CD14-positive monocyte (primary cell): ENCODE measurements at regions of chr1 and their contacts with region 1.

Region 1: DNA sequence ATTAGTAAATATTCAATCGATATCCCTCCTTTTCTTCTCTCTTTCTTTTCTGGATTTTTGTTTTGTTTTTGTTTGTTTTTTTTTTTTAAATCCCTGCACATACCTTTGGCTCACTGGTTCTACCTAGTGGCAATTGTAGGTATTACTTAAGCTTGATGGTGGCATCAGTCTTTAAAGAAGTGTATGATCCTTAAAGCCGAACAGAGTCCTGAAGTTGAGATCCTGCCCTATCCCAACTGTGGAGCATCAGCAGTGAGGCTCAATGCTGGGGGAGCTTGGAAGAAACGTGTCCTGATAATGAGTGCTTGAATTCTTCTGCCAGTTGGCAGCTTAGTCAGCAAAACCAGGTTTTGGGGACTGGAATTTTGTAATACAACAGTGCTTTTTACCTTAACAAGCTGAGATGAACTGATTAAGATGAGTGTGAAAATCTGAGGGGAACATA is 60.8 kb downstream of the FASLG start:
- DNase-seq: peak in 2 of 3 donors; percentile 34 to 45
- H3K4me3 ChIP-seq: no peak overlapping the region
- H3K4me3 Mint-ChIP-seq: no peak overlapping the region
- H3K27ac ChIP-seq: no peak overlapping the region
- H3K27ac Mint-ChIP-seq: no peak overlapping the region
- H3K4me1 ChIP-seq: peaks cover 4 to 6% of the 10 kb centered on the region in 2 donors
- H3K4me1 Mint-ChIP-seq: peaks cover 15% of the 10 kb centered on the region
- H3K27me3 ChIP-seq: no peaks in the 10 kb centered on the region
- H3K27me3 Mint-ChIP-seq: peaks cover 0 to 4% (median 4%) of the 10 kb centered on the region in 3 donors
- CTCF ChIP-seq: peak; percentile 91

Region 2: GRCh38 chr1:172449585-172450534 is 269.9 kb before region 1 on chr1:
- intact Hi-C with region 1: loop called in 1 of 2 experiments (anchors 5 kb)
- DNase-seq: peak; percentile 64 to 84 (median 71)
- H3K4me3 ChIP-seq: peak overlapping the region in 1 of 3 experiments; percentile 25
- H3K4me3 Mint-ChIP-seq: peak overlapping the region; percentile 53 to 65
- H3K27ac ChIP-seq: peak overlapping the region in 1 of 2 donors; percentile 57
- H3K27ac Mint-ChIP-seq: peak overlapping the region in 6 of 7 donors; percentile 1 to 90 (median 28)
- H3K4me1 ChIP-seq: peaks cover 25 to 34% of the 10 kb centered on the region in 2 donors
- H3K4me1 Mint-ChIP-seq: peaks cover 45% of the 10 kb centered on the region
- H3K27me3 ChIP-seq: no peaks in the 10 kb centered on the region
- H3K27me3 Mint-ChIP-seq: peaks cover 0 to 5% (median 0%) of the 10 kb centered on the region in 3 donors
- CTCF ChIP-seq: peak; percentile 91

Region 3: DNA sequence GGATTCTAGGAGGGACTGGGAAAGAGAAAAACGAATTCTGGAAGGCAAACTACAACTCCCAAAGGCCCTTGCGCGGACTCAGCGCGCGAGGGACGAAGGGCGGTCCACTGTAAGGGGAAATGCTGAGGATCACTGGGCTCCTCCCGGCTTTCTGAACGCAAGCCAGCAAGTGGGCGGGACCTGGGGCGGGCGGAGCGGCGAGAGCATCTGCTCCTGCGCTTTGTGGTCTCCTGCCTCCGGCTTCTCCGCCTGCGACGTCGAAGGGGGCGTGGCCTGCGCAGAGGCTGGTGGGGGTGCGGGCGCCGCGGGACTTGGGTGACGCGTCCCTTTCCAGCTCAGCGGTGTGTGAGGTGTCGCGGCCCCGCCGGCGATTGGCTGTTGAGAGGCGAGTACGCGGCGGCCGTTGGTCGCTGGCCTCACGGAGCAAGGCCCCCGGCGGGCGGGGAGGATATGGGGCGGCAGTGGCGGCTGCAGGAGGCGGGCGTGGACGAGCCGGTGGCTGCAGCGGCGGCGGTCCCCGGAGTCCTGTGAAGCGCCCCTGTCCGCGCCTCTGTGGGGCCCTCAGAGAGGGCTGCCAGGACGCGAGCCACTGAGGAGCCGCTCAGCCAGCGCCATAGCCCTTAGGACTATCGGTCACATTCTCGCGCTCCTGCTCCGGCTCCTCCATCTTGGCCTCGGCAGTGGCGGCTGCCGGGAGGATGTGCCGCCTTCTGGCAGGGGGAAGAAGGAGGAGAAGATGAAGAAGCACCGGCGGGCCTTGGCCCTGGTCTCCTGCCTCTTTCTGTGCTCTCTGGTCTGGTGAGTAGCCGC is 186.8 kb before region 1 on chr1 and contains the start of gene SUCO:
- intact Hi-C with region 1: loop called in 1 of 2 experiments (anchors 10 kb)
- DNase-seq: peak; percentile 98 to 100 (median 100)
- H3K4me3 ChIP-seq: peak within 1 kb of the TSS; percentile 83 to 99 (median 97)
- H3K4me3 Mint-ChIP-seq: peak within 1 kb of the TSS; percentile 97 to 100
- H3K27ac ChIP-seq: peak within 1 kb of the TSS; percentile 96 to 100
- H3K27ac Mint-ChIP-seq: peak within 1 kb of the TSS; percentile 100
- H3K4me1 ChIP-seq: peaks cover 33 to 43% of the 10 kb centered on the region in 2 donors
- H3K4me1 Mint-ChIP-seq: peaks cover 42% of the 10 kb centered on the region
- H3K27me3 ChIP-seq: no peaks in the 10 kb centered on the region
- H3K27me3 Mint-ChIP-seq: no peaks in the 10 kb centered on the region
- CTCF ChIP-seq: no peak
- polyA plus RNA-seq, gene SUCO: 6.8 to 8.5 (median 6.8) TPM

Region 4: DNA sequence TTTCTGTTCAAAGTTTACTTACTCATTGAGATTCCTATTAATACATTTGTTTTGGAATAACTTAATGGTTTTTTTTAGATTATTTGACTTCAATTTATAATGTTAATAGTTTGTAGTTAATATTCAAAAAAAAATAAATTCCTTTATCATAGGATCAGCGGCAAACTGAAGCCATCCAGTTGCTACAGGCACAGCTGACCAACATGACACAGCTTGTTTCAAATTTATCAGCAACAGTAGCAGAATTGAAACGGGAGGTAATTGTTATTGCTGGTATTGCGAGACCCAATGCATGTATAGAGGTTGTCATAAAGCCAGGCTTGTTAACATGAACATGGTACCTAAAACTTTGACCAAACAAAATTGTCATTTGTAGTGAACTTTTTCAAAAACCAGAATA is 119.8 kb before region 1 on chr1:
- intact Hi-C with region 1: loop called in 1 of 2 experiments (anchors 10 kb)
- DNase-seq: no peak
- H3K4me3 ChIP-seq: no peak overlapping the region
- H3K4me3 Mint-ChIP-seq: no peak overlapping the region
- H3K27ac ChIP-seq: no peak overlapping the region
- H3K27ac Mint-ChIP-seq: no peak overlapping the region
- H3K4me1 ChIP-seq: no peaks in the 10 kb centered on the region
- H3K4me1 Mint-ChIP-seq: no peaks in the 10 kb centered on the region
- H3K27me3 ChIP-seq: no peaks in the 10 kb centered on the region
- H3K27me3 Mint-ChIP-seq: no peaks in the 10 kb centered on the region
- CTCF ChIP-seq: no peak

Region 5: GRCh38 chr1:172638885-172639831 is 80.6 kb before region 1 on chr1:
- intact Hi-C with region 1: no loop called
- DNase-seq: no peak
- H3K4me3 ChIP-seq: no peak overlapping the region
- H3K4me3 Mint-ChIP-seq: peak overlapping the region in 1 of 2 donors; percentile 25
- H3K27ac ChIP-seq: no peak overlapping the region
- H3K27ac Mint-ChIP-seq: no peak overlapping the region
- H3K4me1 ChIP-seq: peaks cover 12 to 15% of the 10 kb centered on the region in 2 donors
- H3K4me1 Mint-ChIP-seq: peaks cover 24% of the 10 kb centered on the region
- H3K27me3 ChIP-seq: no peaks in the 10 kb centered on the region
- H3K27me3 Mint-ChIP-seq: no peaks in the 10 kb centered on the region
- CTCF ChIP-seq: no peak

Region 6: GRCh38 chr1:172928412-172928811 is 208.7 kb after region 1 on chr1:
- intact Hi-C with region 1: no loop called
- DNase-seq: no peak
- H3K4me3 ChIP-seq: no peak overlapping the region
- H3K4me3 Mint-ChIP-seq: no peak overlapping the region
- H3K27ac ChIP-seq: no peak overlapping the region
- H3K27ac Mint-ChIP-seq: no peak overlapping the region
- H3K4me1 ChIP-seq: peaks cover under 1 to 2% of the 10 kb centered on the region in 2 donors
- H3K4me1 Mint-ChIP-seq: peaks cover 3% of the 10 kb centered on the region
- H3K27me3 ChIP-seq: no peaks in the 10 kb centered on the region
- H3K27me3 Mint-ChIP-seq: peaks cover 0 to 1% (median 0%) of the 10 kb centered on the region in 3 donors
- CTCF ChIP-seq: no peak